ENCODE measurements at regions of chr14 and their contacts with region 1.

Region 1: GRCh38 chr14:68491793-68492192 is 301.1 kb downstream of the ZFP36L1 start:
- DNase-seq: peak; percentile 37
- ATAC-seq: peak; percentile 43
- H3K4me3 Mint-ChIP-seq: no peak overlapping the region
- H3K27ac Mint-ChIP-seq: no peak overlapping the region
- H3K4me1 Mint-ChIP-seq: peaks cover 50% of the 10 kb centered on the region
- H3K27me3 Mint-ChIP-seq: no peaks in the 10 kb centered on the region
- CTCF ChIP-seq: no peak

Region 2: DNA sequence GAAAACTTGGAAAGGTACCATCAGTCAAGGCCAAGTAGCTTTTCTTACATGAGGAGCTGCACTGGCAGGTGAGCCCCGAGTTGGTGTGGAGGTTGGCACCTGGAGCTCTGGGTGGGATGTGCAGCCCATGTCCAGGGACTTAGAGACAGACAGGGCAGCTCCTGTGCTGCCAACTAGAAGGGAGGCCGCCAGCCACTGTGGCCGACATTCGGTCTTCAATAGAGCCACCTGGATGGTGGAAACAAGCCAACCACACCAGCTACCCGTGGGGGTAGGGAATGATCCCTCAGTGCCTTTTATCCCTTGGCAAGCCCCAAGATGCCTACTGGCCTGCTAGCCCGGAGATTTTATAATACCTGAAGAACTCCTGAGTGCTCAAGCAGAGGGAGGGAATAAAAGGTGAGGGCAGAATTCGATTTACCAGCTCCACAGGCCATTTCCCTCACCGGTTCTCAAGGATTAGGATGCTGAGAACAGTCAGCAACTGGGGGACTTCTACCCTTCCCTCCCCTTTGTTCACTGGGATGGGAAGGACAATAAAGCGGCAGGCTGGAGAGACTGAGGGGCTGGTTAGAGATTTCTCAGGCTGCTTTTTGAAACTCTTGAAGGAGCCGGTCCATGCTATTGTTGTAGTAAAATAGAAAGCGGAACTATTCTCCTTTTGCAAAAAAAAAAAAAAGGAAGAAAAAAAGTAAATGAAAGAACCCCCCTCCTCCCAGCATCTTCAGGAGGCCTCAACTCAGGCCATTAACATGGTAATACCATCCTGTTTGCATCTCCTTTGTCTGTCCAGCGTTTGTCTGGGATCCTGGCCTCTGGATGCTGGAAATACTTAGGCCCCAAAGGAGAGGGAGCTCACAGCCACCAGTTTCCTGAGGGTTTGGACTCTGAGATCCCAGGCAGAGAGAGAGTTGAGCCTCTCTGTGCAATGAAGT is 20.5 kb before region 1 on chr14:
- CTCF ChIA-PET with region 1: interaction called, 11 read pairs
- POLR2A ChIA-PET with region 1: no interaction called
- DNase-seq: peak; percentile 43
- ATAC-seq: peak; percentile 94
- H3K4me3 Mint-ChIP-seq: no peak overlapping the region; the same call in 1 of the 2 replicates
- H3K27ac Mint-ChIP-seq: peak overlapping the region; percentile 97
- H3K4me1 Mint-ChIP-seq: peaks cover 76% of the 10 kb centered on the region
- H3K27me3 Mint-ChIP-seq: no peaks in the 10 kb centered on the region
- CTCF ChIP-seq: no peak

Measured in WTC11 (cell line).